PC-9 (cell line): ENCODE measurements at regions of chr3 and their contacts with region 1.

Region 1: GRCh38 chr3:187738331-187739093 is 6.8 kb downstream of the BCL6 start:
- DNase-seq: peak; percentile 82 to 87
- H3K4me3 ChIP-seq: peak overlapping the region; percentile 53
- H3K27ac ChIP-seq: 0 out of 2 replicates have a peak overlapping the region, but pooled peaks have one; percentile 3
- H3K4me1 ChIP-seq: peaks cover 55% of the 10 kb centered on the region
- H3K27me3 ChIP-seq: no peaks in the 10 kb centered on the region
- CTCF ChIP-seq: peak; percentile 85

Region 2: DNA sequence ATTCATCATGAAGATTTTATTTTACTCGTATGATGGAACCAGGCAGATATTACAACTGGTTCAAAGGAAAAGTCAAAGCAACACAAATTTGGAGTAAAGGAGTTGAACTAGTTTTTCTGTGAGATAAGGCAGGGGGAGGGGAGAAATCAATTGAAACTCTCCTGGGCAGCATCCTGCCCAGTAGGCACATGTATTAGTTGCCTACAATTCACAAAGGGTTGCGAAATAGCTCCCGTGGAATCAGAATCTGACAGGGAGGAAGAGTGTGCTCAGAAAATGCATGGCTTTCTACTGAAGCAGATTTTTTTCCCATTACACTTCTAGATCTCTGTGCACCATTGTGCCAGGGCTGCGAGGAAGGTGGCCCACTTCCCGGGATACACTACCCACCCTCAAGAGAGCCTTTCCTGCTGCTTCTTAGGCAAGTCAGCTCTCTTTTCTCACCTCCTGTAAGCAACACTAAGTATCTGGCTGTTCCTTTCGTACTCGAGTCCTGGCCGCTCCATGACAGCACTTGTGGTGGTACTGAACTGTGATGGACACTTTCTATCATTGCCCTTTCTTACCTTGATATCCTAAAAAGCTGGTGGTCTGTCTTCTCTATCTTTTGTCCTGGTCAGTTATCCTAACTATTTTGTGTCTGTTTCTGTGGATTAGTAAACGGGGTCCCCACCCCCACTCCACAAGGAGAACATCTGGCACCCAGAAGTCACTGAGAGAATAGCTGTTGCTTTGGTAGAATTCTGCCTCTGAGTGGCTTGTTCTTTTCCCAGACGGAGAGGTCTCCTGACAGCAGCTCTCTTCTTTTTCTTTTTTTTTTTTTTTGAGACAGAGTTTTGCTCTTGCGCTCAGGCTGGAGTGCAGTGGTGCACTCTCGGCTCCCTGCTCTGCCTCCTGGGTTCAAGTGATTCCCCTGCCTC is 674.1 kb before region 1 on chr3:
- CTCF ChIA-PET with region 1: no interaction called
- POLR2A ChIA-PET with region 1: no interaction called
- intact Hi-C with region 1: no loop called
- DNase-seq: peak; percentile 64 to 93
- H3K4me3 ChIP-seq: peak overlapping the region; percentile 42; the same call in 1 of the 2 replicates
- H3K27ac ChIP-seq: peak overlapping the region; percentile 95
- H3K4me1 ChIP-seq: peaks cover 55% of the 10 kb centered on the region
- H3K27me3 ChIP-seq: no peaks in the 10 kb centered on the region
- CTCF ChIP-seq: no peak; the same call in 1 of the 2 replicates

Region 3: GRCh38 chr3:188037216-188037718 is 298.8 kb after region 1 on chr3:
- CTCF ChIA-PET with region 1: interaction called, 11 read pairs
- POLR2A ChIA-PET with region 1: no interaction called
- intact Hi-C with region 1: no loop called
- DNase-seq: peak in 1 of 2 experiments; percentile 36
- H3K4me3 ChIP-seq: no peak overlapping the region
- H3K27ac ChIP-seq: peak overlapping the region; percentile 35
- H3K4me1 ChIP-seq: peaks cover 47% of the 10 kb centered on the region
- H3K27me3 ChIP-seq: no peaks in the 10 kb centered on the region
- CTCF ChIP-seq: peak; percentile 64

Region 4: DNA sequence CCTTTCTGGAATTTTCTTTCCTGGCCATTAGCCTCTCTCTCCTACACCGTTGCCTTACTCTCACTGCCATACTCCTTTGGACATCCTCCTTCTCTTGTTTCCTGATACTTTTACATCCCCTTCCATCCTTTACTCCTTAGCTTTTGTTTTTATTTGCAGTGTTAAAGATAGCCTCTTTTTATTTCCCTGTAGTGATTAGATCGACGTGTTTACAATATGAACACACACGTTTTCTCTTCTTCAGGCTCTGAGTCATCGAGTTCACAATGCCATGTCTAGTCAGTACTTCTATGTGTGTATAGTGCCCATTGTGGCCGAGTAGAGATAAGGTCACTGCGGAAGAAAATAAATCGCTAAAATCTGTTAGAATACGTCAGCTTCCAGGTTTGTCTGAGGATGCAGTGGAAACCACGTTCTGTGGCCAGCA is 623.9 kb after region 1 on chr3:
- CTCF ChIA-PET with region 1: interaction called, 4 read pairs
- POLR2A ChIA-PET with region 1: no interaction called
- intact Hi-C with region 1: loop called (anchors 5 kb)
- DNase-seq: peak; percentile 41 to 87
- H3K4me3 ChIP-seq: no peak overlapping the region
- H3K27ac ChIP-seq: peak overlapping the region; percentile 17; the same call in 1 of the 2 replicates
- H3K4me1 ChIP-seq: peaks cover 9% of the 10 kb centered on the region
- H3K27me3 ChIP-seq: no peaks in the 10 kb centered on the region
- CTCF ChIP-seq: 0 out of 2 replicates have a peak, but pooled peaks have one; percentile 38

Region 5: DNA sequence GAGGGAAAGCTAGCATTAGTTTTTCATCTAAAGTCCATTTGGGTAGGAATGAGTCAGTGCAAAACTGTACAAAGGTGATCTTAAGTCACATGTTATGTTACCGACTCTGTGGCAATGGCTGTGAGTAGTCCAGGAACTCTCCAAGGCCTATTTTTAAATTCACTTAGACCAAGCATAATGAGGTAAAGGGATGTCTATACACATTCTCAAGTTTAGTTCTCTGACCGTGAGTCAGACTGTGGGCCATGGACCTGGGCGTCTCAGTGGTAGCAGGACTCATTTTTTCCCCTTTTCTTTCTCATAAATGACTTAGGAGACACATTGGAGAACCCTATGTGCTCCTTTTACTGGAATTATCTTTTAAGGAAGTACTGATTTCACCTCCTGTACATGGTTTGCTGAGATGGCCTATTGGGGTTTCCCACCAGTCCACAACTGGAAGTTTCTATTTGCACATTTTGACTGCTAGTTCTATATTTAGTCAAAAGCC is 944.6 kb after region 1 on chr3:
- CTCF ChIA-PET with region 1: interaction called, 4 read pairs
- POLR2A ChIA-PET with region 1: interaction called, 10 read pairs
- intact Hi-C with region 1: loop called (anchors 2 kb)
- DNase-seq: peak; percentile 39 to 64
- H3K4me3 ChIP-seq: no peak overlapping the region
- H3K27ac ChIP-seq: peak overlapping the region; percentile 11; the same call in 1 of the 2 replicates
- H3K4me1 ChIP-seq: peaks cover 38% of the 10 kb centered on the region
- H3K27me3 ChIP-seq: no peaks in the 10 kb centered on the region
- CTCF ChIP-seq: no peak

Region 6: DNA sequence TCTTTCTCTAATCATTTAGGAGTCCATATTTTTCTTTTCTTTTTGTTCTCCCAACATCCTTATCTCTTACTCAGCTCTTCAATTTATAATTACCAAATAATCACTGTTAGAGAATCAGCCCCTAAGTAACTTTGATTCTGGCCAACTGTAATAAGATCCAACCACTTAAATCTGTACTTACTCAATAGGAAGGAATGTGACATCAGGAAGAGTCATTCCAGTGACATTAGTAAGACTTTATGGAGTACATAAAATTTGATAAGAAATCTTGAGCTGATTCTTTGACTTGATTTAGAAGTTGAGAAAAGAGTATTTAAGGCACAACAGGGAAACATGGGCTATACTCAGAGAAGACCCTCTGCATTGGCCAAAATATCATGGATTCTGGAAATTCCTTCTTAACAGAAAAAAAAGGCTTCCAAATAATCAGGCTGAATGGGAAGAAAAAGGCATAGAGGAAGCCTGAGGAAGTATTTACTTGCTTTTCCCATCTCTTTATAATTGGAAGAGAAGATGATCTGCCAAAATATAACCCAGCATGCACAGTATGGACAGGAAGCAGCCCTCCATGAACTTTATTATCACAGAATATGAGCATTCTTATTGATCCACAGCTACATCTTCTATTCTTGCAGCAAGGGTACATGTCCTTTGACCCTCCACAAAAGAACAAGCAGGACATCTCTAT is 1143.6 kb after region 1 on chr3:
- CTCF ChIA-PET with region 1: interaction called, 4 read pairs
- POLR2A ChIA-PET with region 1: no interaction called
- intact Hi-C with region 1: loop called (anchors 5 kb)
- DNase-seq: peak in 1 of 2 experiments; percentile 96
- H3K4me3 ChIP-seq: no peak overlapping the region
- H3K27ac ChIP-seq: peak overlapping the region; percentile 57
- H3K4me1 ChIP-seq: peaks cover 25% of the 10 kb centered on the region
- H3K27me3 ChIP-seq: no peaks in the 10 kb centered on the region
- CTCF ChIP-seq: no peak

Region 7: DNA sequence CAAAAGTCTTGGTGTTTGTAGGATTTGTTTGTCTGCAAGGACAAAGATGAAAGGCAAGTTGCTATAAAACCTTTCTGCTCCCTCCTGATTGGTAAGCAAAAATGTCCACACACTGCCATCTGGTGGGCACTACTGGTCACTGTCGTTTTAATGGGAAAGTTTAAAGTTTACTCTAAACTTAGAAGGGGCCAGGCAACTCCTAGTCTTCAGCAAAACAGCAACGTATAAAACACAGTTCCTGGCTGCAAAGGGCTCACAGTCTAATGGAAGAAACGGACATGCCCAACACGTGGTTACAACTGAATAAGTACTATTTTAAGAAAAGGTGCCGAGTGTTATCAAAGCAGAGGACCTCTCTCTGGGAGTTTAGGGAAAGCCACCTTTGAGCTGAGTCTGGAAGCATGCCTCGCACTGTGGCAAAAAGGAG is 1409.6 kb after region 1 on chr3:
- CTCF ChIA-PET with region 1: interaction called, 3 read pairs
- POLR2A ChIA-PET with region 1: no interaction called
- intact Hi-C with region 1: loop called (anchors 1 kb)
- DNase-seq: peak; percentile 59
- H3K4me3 ChIP-seq: no peak overlapping the region
- H3K27ac ChIP-seq: no peak overlapping the region
- H3K4me1 ChIP-seq: peaks cover 7% of the 10 kb centered on the region
- H3K27me3 ChIP-seq: no peaks in the 10 kb centered on the region
- CTCF ChIP-seq: peak; percentile 97